CD14-positive monocyte (primary cell): ENCODE measurements at regions of chr2 and their contacts with region 1.

Region 1: GRCh38 chr2:239602290-239603282 is 201.8 kb upstream of the HDAC4 start:
- DNase-seq: peak; percentile 23 to 39 (median 38)
- H3K4me3 ChIP-seq: peak overlapping the region in 1 of 3 experiments; percentile 18
- H3K4me3 Mint-ChIP-seq: peak overlapping the region; percentile 45 to 51
- H3K27ac ChIP-seq: peak overlapping the region; percentile 9 to 59
- H3K27ac Mint-ChIP-seq: peak overlapping the region in 6 of 7 donors; percentile 63 to 90 (median 81)
- H3K4me1 ChIP-seq: peaks cover 56 to 71% of the 10 kb centered on the region in 2 donors
- H3K4me1 Mint-ChIP-seq: peaks cover 67% of the 10 kb centered on the region
- H3K27me3 ChIP-seq: no peaks in the 10 kb centered on the region
- H3K27me3 Mint-ChIP-seq: peaks cover 0 to 6% (median 0%) of the 10 kb centered on the region in 3 donors
- CTCF ChIP-seq: no peak

Region 2: DNA sequence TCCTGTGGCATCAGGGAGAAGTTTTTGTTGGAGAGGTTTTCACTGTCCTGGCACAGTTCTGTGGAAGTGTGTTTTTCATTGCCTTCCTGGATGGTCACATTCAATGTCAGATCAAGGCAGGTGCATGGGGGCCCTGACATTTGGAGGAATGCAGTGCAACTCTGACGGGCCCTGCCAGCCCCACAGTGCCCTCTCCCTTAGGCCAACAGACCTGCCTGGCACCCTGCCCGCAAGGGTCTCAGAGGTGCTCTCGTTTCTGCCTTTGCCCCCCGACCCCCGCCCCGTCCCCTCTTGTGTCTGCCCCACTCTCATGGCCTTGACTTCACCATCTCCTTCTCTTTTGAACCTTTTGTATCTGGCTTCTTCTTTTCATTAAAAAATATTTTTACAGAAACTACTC is 55.4 kb after region 1 on chr2:
- intact Hi-C with region 1: loop called (anchors 5 kb)
- DNase-seq: no peak
- H3K4me3 ChIP-seq: no peak overlapping the region
- H3K4me3 Mint-ChIP-seq: peak overlapping the region in 1 of 2 donors; percentile 24
- H3K27ac ChIP-seq: no peak overlapping the region
- H3K27ac Mint-ChIP-seq: peak overlapping the region in 1 of 7 donors; percentile 15
- H3K4me1 ChIP-seq: peaks cover 42 to 51% of the 10 kb centered on the region in 2 donors
- H3K4me1 Mint-ChIP-seq: peaks cover 55% of the 10 kb centered on the region
- H3K27me3 ChIP-seq: peaks cover 2 to 3% of the 10 kb centered on the region in 2 donors
- H3K27me3 Mint-ChIP-seq: peaks cover 7 to 14% (median 7%) of the 10 kb centered on the region in 3 donors
- CTCF ChIP-seq: no peak